ENCODE measurements at regions of chr11 and their contacts with region 1.

Region 1: DNA sequence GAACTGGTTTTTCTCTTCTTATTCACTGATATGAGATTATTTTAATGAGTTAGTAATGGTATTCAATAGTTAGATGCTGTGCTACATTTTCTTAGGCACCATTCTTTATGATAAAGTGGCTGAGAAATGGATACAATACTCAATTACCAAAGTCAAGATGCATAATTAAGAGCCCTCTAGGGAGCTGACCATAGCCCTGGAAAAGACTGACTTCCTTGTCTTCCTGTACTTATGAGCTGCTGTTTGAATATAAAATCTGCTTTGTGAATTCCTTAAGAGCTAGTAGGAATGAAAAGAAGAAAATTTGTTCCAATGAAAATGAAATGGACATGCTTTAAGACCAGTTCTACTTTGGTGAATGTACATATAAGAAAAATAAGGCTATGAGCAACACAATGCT is 452.3 kb downstream of the KCNA4 start:
- DNase-seq: no peak
- ATAC-seq: no peak
- H3K4me3 ChIP-seq: no peak overlapping the region
- H3K27ac ChIP-seq: no peak overlapping the region
- H3K4me1 ChIP-seq: no peaks in the 10 kb centered on the region
- H3K27me3 ChIP-seq: no peaks in the 10 kb centered on the region

Region 2: DNA sequence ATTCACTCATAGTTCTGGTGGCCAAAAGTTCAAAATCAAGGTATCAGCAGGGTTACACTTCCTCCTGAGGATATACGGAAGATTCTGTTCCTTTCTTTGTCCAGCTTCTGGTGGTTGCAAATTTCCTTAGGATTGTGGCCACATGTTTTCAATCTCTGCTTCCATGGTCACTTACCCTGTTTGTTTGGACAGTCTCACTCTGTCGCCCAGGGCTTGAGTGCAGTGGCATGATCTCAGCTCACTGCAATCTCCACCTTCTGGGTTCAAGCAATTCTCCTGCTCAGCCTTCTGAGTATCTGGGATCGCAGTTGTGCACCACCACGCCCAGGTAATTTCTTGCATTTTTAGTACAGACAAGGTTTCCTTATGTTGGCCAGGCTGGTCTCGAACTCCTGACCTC is 82.0 kb before region 1 on chr11:
- intact Hi-C with region 1: no loop called
- DNase-seq: no peak
- ATAC-seq: no peak
- H3K4me3 ChIP-seq: no peak overlapping the region
- H3K27ac ChIP-seq: no peak overlapping the region
- H3K4me1 ChIP-seq: no peaks in the 10 kb centered on the region
- H3K27me3 ChIP-seq: no peaks in the 10 kb centered on the region

Region 3: DNA sequence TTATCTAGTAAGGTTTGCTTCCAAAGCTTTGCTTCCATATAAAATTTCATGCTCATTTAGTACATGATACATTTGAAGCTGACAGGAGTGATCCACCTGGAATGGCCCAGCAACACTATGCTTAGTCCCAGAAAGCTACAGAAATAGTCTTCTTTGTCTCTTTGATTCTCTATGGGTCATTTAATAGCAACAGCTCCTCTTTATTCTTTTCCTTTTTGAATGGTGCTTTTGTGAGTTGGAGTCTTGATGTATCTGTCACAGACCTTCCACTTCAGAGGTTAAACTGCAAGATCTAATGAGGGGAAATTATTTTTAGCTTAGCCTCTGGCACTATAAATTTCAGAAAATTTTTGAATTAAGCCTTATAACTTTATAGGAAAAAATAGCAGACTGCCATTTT is 57.1 kb before region 1 on chr11:
- intact Hi-C with region 1: no loop called
- DNase-seq: no peak
- ATAC-seq: no peak
- H3K4me3 ChIP-seq: no peak overlapping the region
- H3K27ac ChIP-seq: no peak overlapping the region
- H3K4me1 ChIP-seq: no peaks in the 10 kb centered on the region
- H3K27me3 ChIP-seq: no peaks in the 10 kb centered on the region

Region 4: DNA sequence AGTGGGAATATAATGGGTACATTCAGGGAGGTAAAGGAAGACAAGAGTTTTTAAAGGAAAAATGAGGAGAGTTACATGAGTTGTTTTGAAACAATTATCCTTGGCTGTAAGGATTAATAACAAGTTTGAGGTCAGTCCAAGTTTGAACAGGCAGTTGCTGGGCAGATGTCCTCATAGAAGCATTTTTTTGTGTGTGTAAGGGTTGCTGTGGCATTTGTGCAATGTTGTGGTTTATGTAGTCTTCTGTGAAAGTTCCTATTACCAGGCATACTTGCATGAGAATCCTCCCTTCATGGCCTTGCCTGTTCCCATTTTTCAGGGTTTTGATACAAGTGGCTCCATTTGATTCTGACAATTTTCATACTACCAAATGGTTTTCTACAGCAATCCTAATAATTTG is 52.1 kb after region 1 on chr11:
- intact Hi-C with region 1: loop called in 1 of 4 experiments (anchors 10 kb)
- DNase-seq: no peak
- ATAC-seq: no peak
- H3K4me3 ChIP-seq: no peak overlapping the region
- H3K27ac ChIP-seq: no peak overlapping the region
- H3K4me1 ChIP-seq: no peaks in the 10 kb centered on the region
- H3K27me3 ChIP-seq: no peaks in the 10 kb centered on the region

Measured in right cardiac atrium (tissue), 5 donors.